ENCODE measurements at regions of chr6 and their contacts with region 1.

Region 1: DNA sequence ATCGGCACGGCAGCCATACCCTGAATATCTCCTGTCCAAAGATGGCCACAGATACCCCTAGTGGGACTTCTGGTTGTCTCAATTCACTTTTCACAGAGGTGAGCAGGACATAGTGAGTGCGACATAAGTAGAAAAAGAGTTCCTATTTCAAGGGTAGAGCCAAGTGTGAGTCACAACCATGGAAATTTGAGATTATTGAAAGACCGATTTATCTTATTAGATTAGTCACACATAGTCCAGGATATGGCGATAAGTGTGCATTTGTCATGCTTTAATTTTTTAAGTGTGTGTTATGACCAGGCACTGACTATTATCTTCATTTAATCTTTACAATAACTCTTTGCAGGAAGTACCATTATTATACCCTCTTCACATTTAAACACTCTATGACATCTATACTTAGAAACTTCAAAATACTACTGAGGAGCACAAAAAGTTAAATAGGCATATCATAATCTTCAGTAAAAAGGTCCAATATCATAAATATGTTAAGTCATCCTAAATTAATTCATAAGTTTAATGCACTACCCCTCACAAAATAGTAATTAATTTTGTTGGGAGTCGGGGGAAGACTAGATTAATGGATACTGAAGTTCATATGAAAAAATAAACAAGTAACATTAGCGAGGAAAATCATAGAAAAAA is 13.4 kb upstream of the TNFAIP3 start:
- DNase-seq: no peak
- ATAC-seq: no peak
- H3K4me3 ChIP-seq: no peak overlapping the region
- H3K4me3 Mint-ChIP-seq: no peak overlapping the region
- H3K27ac ChIP-seq: no peak overlapping the region
- H3K27ac Mint-ChIP-seq: no peak overlapping the region
- H3K4me1 ChIP-seq: no peaks in the 10 kb centered on the region
- H3K4me1 Mint-ChIP-seq: no peaks in the 10 kb centered on the region
- H3K27me3 ChIP-seq: no peaks in the 10 kb centered on the region
- H3K27me3 Mint-ChIP-seq: no peaks in the 10 kb centered on the region
- CTCF ChIP-seq: no peak

Region 2: DNA sequence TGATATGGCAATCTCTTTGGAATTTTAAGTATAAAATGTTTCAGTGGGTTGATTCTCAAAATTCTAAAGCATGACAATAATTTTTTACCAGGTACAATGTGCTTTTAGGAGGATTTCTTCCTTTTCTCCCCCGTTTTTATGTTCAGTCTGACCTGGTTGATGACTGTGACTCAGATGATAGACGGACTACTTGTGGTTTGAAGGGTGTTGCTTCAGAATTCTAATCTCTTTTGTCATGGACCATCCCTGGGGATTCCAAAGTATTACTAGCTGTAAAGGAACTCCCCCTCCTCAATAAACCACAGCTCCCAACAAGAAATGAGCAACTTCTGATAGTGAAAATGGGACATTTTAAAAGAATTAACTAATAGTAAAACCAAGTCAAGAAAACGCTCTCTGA is 21.6 kb before region 1 on chr6:
- CTCF ChIA-PET with region 1: no interaction called
- POLR2A ChIA-PET with region 1: no interaction called
- intact Hi-C with region 1: loop called in 1 of 2 experiments (anchors 1 kb)
- DNase-seq: no peak
- ATAC-seq: no peak
- H3K4me3 ChIP-seq: no peak overlapping the region
- H3K4me3 Mint-ChIP-seq: no peak overlapping the region
- H3K27ac ChIP-seq: no peak overlapping the region
- H3K27ac Mint-ChIP-seq: no peak overlapping the region
- H3K4me1 ChIP-seq: peaks cover 14% of the 10 kb centered on the region
- H3K4me1 Mint-ChIP-seq: peaks cover 22% of the 10 kb centered on the region
- H3K27me3 ChIP-seq: no peaks in the 10 kb centered on the region
- H3K27me3 Mint-ChIP-seq: no peaks in the 10 kb centered on the region
- CTCF ChIP-seq: no peak

Measured in CD8-positive, alpha-beta T cell (primary cell).